HAP-1 (cell line): ENCODE measurements at regions of chr1 and their contacts with region 1.

Region 1: DNA sequence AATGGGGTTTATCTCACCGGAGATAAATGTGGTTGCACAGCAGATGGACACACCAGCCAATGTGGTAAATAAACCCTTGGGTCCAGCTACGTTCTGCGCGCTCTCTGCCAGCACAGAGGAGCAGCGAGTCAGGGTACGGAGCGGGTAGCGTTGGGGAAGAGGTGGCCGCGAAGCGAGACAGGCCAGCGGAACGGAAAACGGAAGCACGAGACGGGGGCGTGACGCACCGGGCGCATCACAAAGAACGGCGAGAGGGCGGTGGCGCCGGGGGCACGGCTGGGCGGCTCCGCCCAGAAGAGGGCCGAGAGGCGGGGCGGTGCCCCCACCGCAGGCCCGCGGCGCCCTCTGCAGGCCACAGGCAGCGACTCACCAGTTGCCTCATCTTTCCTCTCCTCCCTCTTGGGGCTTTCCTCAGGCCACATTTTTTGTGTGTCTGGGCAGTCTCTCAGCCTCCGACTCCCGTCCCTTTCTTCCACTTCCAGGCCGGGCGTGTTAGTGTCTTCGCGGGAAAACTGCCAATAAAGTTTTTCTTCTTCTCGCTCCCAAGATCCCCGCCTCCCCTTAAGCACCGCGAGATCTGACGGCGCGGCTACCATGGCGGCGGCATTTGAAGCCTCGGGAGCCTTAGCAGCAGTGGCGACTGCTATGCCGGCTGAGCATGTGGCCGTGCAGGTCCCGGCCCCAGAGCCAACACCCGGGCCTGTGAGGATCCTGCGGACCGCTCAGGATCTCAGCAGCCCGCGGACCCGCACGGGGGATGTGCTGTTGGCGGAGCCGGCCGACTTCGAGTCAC is at the start of gene DDX20:
- DNase-seq: peak; percentile 92 to 94
- H3K4me3 ChIP-seq: peak within 1 kb of the TSS; percentile 99
- H3K4me1 ChIP-seq: peaks cover 14% of the 10 kb centered on the region
- H3K27me3 ChIP-seq: no peaks in the 10 kb centered on the region

Region 2: DNA sequence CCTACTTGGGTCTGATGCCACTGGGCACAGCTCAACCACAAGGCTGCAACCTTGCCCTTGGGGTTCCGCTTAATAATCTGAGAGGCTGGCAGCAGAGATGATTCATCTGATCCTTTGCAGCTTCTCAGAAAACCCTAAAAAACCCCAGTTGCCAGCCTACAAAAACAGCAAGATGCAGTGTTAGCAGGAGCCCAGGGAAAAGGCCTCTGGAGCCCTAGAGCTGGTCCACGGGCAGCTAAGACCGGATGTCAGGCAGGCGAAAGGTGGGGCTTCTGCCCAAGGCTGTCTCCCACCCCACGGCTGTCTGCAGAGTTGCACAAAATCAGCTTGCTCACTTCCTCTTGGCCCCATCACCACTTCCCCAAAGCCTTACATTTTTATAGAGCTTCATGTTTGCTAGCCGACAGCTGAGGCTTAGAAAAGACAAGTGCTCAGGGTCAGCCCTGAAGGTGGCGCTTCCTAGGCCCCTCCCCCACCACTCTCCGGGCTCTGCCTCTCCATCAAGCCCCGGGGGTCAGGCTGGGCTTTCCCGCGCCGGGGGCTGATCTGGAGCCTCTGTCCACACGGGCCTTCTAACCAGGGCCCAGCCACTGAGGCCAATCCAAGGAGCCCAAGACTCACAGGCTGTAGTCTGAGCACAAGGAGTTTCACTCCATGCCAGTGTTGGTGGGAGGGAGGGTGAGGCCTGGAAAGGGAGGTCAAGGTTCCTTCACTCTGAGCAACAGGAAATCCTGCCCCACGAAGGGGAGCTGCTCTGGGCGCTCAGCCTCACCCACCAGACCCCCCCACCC is 247.9 kb before region 1 on chr1:
- in situ Hi-C with region 1: loop called (anchors 10 kb)
- DNase-seq: peak; percentile 64 to 86
- H3K4me3 ChIP-seq: peak overlapping the region; percentile 7
- H3K4me1 ChIP-seq: peaks cover 15% of the 10 kb centered on the region
- H3K27me3 ChIP-seq: no peaks in the 10 kb centered on the region; the same call in 1 of the 2 replicates

Region 3: DNA sequence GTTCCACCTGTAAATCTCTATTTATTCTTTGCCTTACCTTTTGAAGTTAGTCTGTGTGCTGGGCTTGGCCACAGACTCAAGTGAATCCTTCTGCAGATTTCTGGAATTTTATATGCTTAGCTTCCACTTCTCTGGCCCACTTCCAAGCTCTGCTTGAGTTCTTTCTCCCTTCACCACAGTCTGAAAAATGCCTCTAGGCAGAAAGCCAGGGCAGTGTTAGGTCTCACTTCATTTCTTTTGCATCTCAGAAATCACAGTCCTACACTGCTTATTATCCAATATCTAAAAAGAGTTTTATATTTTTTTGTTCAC is 65.3 kb before region 1 on chr1:
- in situ Hi-C with region 1: no loop called
- DNase-seq: peak in 1 of 2 experiments; percentile 48
- H3K4me3 ChIP-seq: no peak overlapping the region
- H3K4me1 ChIP-seq: no peaks in the 10 kb centered on the region
- H3K27me3 ChIP-seq: no peaks in the 10 kb centered on the region